PC-9 (cell line): ENCODE measurements at regions of chr19 and their contacts with region 1.

Region 1: DNA sequence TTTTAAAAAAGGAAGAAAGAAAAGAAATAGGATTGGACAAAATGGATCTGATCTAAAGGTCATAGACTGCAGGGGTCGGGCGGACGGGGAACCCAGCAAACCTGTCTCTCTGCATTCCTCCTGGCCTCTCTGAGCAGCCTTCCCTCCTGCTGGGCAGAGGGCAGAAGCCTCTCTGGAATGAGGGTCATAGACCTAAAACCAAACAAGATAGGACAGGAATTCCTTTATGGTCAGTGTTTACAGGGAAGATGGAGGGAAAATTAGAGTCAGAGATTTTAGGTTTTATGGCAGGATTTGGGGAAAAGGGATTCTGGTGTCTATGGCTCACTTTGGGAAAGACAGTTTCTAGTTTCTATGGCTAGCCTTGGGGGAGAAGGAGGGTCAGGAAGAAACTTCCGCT is 19.0 kb upstream of the DPRX start:
- DNase-seq: peak; percentile 86 to 92
- H3K4me3 ChIP-seq: peak overlapping the region; percentile 6; the same call in 1 of the 2 replicates
- H3K27ac ChIP-seq: peak overlapping the region; percentile 43
- H3K4me1 ChIP-seq: peaks cover 30% of the 10 kb centered on the region
- H3K27me3 ChIP-seq: no peaks in the 10 kb centered on the region
- CTCF ChIP-seq: no peak

Region 2: DNA sequence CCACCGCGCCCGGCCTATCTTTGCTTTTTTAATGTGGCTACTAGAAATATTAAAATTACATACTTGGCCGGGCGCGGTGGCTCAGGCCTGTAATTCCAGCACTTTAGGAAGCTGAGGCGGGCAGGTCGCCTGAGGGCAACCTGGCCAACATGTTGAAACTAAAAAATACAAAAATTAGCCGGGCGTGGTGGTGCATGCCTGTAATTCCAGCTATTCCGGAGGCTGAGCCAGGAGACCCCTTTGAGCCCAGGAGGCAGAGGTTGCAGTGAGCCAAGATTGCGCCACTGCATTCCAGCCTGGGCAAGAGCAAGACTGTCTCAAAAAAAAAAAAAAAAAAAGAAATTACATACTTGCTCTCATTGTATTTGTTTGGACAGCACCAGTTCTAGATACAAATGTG is 15.7 kb before region 1 on chr19:
- CTCF ChIA-PET with region 1: no interaction called
- POLR2A ChIA-PET with region 1: no interaction called
- intact Hi-C with region 1: loop called (anchors 1 kb)
- DNase-seq: peak; percentile 90 to 91
- H3K4me3 ChIP-seq: no peak overlapping the region
- H3K27ac ChIP-seq: peak overlapping the region; percentile 40
- H3K4me1 ChIP-seq: peaks cover 15% of the 10 kb centered on the region
- H3K27me3 ChIP-seq: no peaks in the 10 kb centered on the region
- CTCF ChIP-seq: no peak

Region 3: GRCh38 chr19:53785101-53785889 is 172.5 kb after region 1 on chr19:
- CTCF ChIA-PET with region 1: no interaction called
- POLR2A ChIA-PET with region 1: no interaction called
- intact Hi-C with region 1: no loop called
- DNase-seq: peak; percentile 26 to 86
- H3K4me3 ChIP-seq: no peak overlapping the region
- H3K27ac ChIP-seq: no peak overlapping the region
- H3K4me1 ChIP-seq: peaks cover 12% of the 10 kb centered on the region
- H3K27me3 ChIP-seq: no peaks in the 10 kb centered on the region
- CTCF ChIP-seq: no peak